Dorsolateral prefrontal cortex (tissue), 120 donors: ENCODE measurements at regions of chr12 and their contacts with region 1.

Region 1: GRCh38 chr12:9039397-9039977 is 50.1 kb downstream of the KLRG1 start:
- DNase-seq: no peak
- H3K4me3 ChIP-seq: no peak overlapping the region
- H3K27ac ChIP-seq: no peak overlapping the region
- H3K27me3 ChIP-seq: no peaks in the 10 kb centered on the region
- CTCF ChIP-seq: peak; percentile 52 to 86 (median 76)

Region 2: GRCh38 chr12:8681041-8681902 is 358.2 kb before region 1 on chr12:
- intact Hi-C with region 1: loop called (anchors 5 to 10 kb)
- DNase-seq: no peak
- H3K4me3 ChIP-seq: peak overlapping the region in 21 of 59 donors; percentile 0 to 49 (median 25)
- H3K27ac ChIP-seq: peak overlapping the region in 35 of 59 donors; percentile 1 to 81 (median 51)
- H3K27me3 ChIP-seq: no peaks in the 10 kb centered on the region
- CTCF ChIP-seq: no peak

Region 3: GRCh38 chr12:8905546-8905945 is 133.9 kb before region 1 on chr12:
- intact Hi-C with region 1: loop called in 1 of 2 experiments (anchors 10 kb)
- DNase-seq: no peak
- H3K4me3 ChIP-seq: no peak overlapping the region
- H3K27ac ChIP-seq: no peak overlapping the region
- H3K27me3 ChIP-seq: no peaks in the 10 kb centered on the region
- CTCF ChIP-seq: no peak

Region 4: DNA sequence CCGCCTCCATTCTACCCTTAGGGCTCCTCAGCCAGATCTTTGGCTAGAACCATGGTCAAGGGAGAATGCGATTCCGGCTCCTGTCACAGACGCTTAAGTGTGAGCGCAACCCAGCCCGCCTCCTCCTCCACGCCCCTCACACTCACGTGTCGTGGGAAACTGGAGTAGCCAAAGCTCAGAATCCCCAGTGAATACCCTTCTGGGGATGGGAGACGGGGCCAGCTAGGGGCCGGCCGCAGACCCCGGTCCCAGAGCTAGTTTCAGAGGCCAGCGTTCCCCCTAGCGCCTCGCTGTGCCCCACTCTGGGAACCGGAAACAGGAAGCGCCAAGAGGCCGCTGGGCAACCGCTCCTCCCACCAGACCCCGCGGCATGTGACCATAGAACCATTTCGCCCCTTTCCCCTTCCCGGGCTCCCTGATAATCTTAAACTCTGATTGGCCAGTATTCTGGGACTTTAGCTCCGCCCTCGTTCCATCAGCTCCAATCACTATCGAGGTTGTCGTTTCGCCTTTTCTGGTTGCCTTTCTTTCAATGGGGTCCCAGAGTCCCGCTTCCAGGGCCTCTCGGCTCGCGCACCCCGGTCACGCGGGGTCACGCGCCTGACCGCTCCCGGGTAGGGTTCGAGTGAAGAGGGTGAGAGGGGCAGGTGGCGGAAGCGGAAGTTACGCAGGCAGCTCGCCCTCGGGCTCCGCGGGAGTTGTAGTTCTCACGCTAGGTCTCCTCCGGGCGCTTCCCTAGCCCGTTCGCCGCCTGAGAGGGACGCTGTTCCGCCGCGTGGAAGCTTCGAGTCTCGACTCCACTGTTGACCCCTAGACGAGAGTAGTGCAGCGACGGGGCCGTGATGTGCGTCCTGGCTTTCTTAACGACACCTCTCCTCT is 89.9 kb before region 1 on chr12 and contains the start of gene M6PR:
- intact Hi-C with region 1: loop called in 1 of 2 experiments (anchors 10 kb)
- DNase-seq: peak; percentile 93 to 97 (median 96)
- H3K4me3 ChIP-seq: peak within 1 kb of the TSS; percentile 55 to 99 (median 92)
- H3K27ac ChIP-seq: peak within 1 kb of the TSS; percentile 92 to 100 (median 99)
- H3K27me3 ChIP-seq: no peaks in the 10 kb centered on the region
- CTCF ChIP-seq: peak in 54 of 56 donors; percentile 16 to 72 (median 50)
- total RNA-seq, gene M6PR: 63.7 to 141 (median 99.9) TPM